ENCODE measurements at regions of chr6 and their contacts with region 1.

Region 1: DNA sequence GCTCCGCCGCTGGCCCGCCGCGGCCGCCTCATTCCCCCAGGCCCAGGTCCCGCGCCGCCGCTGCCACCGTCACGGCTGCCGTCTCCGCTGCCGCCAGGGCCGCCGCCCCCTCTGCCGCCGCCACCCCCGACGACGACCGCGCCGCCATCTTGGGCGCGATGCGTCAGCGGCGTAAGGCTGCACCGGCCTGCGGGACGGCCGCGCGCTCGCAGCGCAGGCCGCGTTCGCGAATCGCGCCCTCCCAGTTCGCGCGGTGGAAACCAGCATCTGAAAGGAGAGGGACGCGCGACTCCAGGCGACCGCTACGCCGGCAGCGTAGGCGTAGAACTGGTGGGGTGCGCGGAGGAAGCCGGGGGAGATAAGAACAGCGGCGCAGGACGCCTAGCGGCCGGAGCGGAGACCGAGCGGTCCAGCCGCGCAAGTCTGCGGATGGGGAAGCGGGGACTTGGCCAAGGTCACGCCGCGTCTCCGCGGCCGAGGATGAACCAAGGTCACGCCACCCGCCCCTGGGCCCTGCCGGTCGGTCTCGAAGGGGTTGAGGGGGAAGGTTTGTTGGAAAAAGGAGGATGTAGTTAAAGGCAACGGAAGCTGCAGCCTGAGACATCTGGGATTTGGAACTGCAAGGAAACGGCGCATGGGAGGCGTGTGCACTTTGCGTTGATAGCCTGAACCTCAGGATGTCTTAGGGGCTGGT is at the start of gene NUDT3:
- DNase-seq: peak; percentile 95
- H3K4me3 ChIP-seq: peak within 1 kb of the TSS; percentile 32 to 82 (median 74)
- H3K27ac ChIP-seq: peak within 1 kb of the TSS; percentile 88 to 96 (median 93)
- H3K4me1 ChIP-seq: peaks cover 6 to 41% (median 23%) of the 10 kb centered on the region in 4 donors
- H3K27me3 ChIP-seq: no peaks in the 10 kb centered on the region
- CTCF ChIP-seq: peak; percentile 73 to 92 (median 77)
- EP300 ChIP-seq: no peak
- POLR2A ChIP-seq: no peak
- total RNA-seq, gene NUDT3: 9.6 to 27.9 (median 16.9) TPM

Region 2: GRCh38 chr6:34248727-34249551 is 143.7 kb before region 1 on chr6 and contains the start of gene SMIM29:
- in situ Hi-C with region 1: loop called in 1 of 4 experiments (anchors 25 kb)
- intact Hi-C with region 1: loop called (anchors 5 kb)
- DNase-seq: peak; percentile 98
- H3K4me3 ChIP-seq: peak within 1 kb of the TSS; percentile 62 to 76 (median 68)
- H3K27ac ChIP-seq: peak within 1 kb of the TSS; percentile 87 to 91 (median 88)
- H3K4me1 ChIP-seq: peaks cover 10 to 26% (median 18%) of the 10 kb centered on the region in 4 donors
- H3K27me3 ChIP-seq: no peaks in the 10 kb centered on the region
- CTCF ChIP-seq: peak; percentile 80 to 98 (median 96)
- EP300 ChIP-seq: no peak
- POLR2A ChIP-seq: peak; percentile 69
- total RNA-seq, gene SMIM29: 8.2 to 14.9 (median 12.5) TPM

Region 3: GRCh38 chr6:34273242-34273805 is 119.3 kb before region 1 on chr6:
- in situ Hi-C with region 1: loop called in 1 of 4 experiments (anchors 25 kb)
- intact Hi-C with region 1: no loop called
- DNase-seq: no peak
- H3K4me3 ChIP-seq: no peak overlapping the region
- H3K27ac ChIP-seq: no peak overlapping the region
- H3K4me1 ChIP-seq: no peaks in the 10 kb centered on the region
- H3K27me3 ChIP-seq: no peaks in the 10 kb centered on the region
- CTCF ChIP-seq: no peak
- EP300 ChIP-seq: no peak
- POLR2A ChIP-seq: no peak

Measured in transverse colon (tissue), 4 donors.